AG04450 (cell line): ENCODE measurements at regions of chr1 and their contacts with region 1.

Region 1: GRCh38 chr1:212035123-212035834 is at the starts of genes DTL and INTS7:
- DNase-seq: peak; percentile 98
- H3K4me3 ChIP-seq: peak within 1 kb of the TSS; percentile 90
- H3K27ac ChIP-seq: peak within 1 kb of the TSS; percentile 59
- H3K27me3 ChIP-seq: no peaks in the 10 kb centered on the region
- CTCF ChIP-seq: peak; percentile 89
- polyA plus RNA-seq, gene DTL: 4.0 and 6.0 TPM in 2 replicates
- polyA plus RNA-seq, gene INTS7: 17.9 and 20.1 TPM in 2 replicates

Region 2: GRCh38 chr1:211698161-211699026 is 336.9 kb before region 1 on chr1:
- CTCF ChIA-PET with region 1: interaction called, 86 read pairs
- POLR2A ChIA-PET with region 1: no interaction called
- DNase-seq: peak; percentile 7
- H3K4me3 ChIP-seq: peak overlapping the region; percentile 29; the same call in 1 of the 2 replicates
- H3K27ac ChIP-seq: no peak overlapping the region
- H3K27me3 ChIP-seq: peaks cover 27% of the 10 kb centered on the region
- CTCF ChIP-seq: peak; percentile 95

Region 3: DNA sequence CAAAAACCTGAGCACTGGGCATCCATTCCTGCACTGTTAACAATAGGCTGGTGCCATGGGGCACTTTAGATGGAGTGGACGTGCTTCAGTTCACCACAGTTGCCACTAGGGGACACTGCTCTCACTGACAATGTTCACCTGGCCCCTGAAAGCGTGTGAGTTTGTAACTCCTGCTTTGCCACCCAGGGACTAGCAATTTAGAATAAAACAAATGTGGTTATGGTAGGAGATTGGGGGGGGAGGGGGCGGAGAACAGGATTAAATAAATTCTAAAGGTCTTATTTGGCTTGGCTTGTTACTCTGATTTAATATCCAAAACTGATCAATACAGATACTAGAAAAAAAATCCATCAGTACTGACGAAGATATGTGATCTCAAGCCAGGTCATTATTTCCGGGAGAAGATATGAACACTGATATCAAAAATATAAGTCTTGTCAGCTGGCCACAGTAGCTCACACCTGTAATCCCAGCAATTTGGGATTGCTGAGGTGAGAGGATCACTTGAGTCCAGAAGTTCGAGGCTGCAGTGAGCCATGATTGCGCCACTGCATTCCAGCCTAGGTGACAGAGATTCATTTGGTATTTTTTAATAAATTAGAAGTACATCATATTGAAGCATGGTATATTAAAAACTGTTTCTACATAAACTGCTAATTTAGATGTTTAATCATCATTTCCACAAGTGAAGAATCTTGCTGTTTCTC is 23.1 kb before region 1 on chr1:
- CTCF ChIA-PET with region 1: interaction called, 95 read pairs
- POLR2A ChIA-PET with region 1: no interaction called
- DNase-seq: no peak
- H3K4me3 ChIP-seq: no peak overlapping the region
- H3K27ac ChIP-seq: no peak overlapping the region
- H3K27me3 ChIP-seq: no peaks in the 10 kb centered on the region
- CTCF ChIP-seq: peak; percentile 99

Region 4: DNA sequence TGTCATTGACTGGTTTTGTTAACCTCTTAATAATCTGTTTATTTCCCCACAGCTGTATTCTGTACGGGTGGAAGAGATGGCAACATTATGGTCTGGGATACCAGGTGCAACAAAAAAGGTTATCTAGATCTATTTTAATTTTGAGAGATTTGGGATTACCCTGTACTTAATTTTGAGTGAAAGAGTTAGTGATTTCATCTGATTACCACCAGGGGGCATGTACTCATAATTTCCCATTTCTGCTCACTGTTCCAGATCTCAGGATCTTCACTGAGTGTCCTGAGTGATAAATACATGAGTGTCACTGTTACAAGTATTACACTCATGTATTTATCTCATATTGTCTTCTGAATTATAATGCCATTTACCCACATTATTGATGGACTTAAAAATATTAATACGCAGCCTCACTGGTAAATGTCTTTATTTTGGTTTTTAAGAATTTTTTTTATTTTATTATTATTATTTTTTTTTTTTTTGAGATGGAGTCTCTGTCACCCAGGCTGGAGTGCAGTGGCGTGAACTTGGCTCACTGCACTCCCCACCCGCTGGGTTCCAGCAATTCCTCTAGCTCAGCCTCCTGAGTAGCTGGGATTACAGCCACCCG is 27.7 kb after region 1 on chr1:
- CTCF ChIA-PET with region 1: interaction called, 36 read pairs
- POLR2A ChIA-PET with region 1: no interaction called
- DNase-seq: peak; percentile 13
- H3K4me3 ChIP-seq: no peak overlapping the region
- H3K27ac ChIP-seq: no peak overlapping the region
- H3K27me3 ChIP-seq: no peaks in the 10 kb centered on the region
- CTCF ChIP-seq: peak; percentile 69

Region 5: DNA sequence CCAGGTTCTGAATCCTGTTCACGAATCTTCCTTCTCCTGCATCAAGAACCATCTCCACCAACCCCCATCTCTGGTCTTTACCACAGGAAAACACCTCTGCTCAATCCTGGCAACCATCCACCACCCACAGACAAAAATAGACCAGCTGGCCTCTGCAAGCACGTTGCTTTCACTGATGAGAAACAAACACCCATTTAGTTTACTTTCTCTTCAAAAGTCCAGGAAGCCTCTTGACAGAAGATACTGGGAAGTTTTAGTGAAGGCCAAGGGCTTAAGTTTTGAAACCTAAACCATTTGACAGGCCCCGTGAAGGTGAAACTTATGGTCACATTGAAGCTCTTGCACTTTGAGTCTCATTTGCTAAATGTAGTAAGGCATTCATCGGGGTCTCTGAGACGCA is 127.4 kb after region 1 on chr1:
- CTCF ChIA-PET with region 1: no interaction called
- POLR2A ChIA-PET with region 1: no interaction called
- DNase-seq: peak; percentile 57
- H3K4me3 ChIP-seq: no peak overlapping the region
- H3K27ac ChIP-seq: no peak overlapping the region
- H3K27me3 ChIP-seq: no peaks in the 10 kb centered on the region
- CTCF ChIP-seq: no peak

Region 6: GRCh38 chr1:212313616-212314015 is 278.3 kb after region 1 on chr1:
- CTCF ChIA-PET with region 1: interaction called, 20 read pairs
- POLR2A ChIA-PET with region 1: no interaction called
- DNase-seq: no peak
- H3K4me3 ChIP-seq: no peak overlapping the region
- H3K27ac ChIP-seq: no peak overlapping the region
- H3K27me3 ChIP-seq: no peaks in the 10 kb centered on the region
- CTCF ChIP-seq: no peak